Heart left ventricle (tissue), 16 donors: ENCODE measurements at regions of chr17 and their contacts with region 1.

Region 1: GRCh38 chr17:4939796-4940624 is at the starts of genes RNF167 and SLC25A11:
- DNase-seq: peak; percentile 94 to 97 (median 95)
- ATAC-seq: peak; percentile 91 to 95 (median 94)
- H3K4me3 ChIP-seq: peak within 1 kb of the TSS; percentile 76 to 98 (median 88)
- H3K27ac ChIP-seq: peak within 1 kb of the TSS; percentile 91 to 100 (median 97)
- H3K4me1 ChIP-seq: peaks cover 11 to 57% (median 33%) of the 10 kb centered on the region in 12 donors
- H3K27me3 ChIP-seq: no peaks in the 10 kb centered on the region
- CTCF ChIP-seq: peak in 2 of 12 donors; percentile 6 to 10
- POLR2A ChIP-seq: peak in 1 of 2 donors; percentile 86
- total RNA-seq, gene RNF167: 50.7 to 111 (median 79.6) TPM
- total RNA-seq, gene SLC25A11: 146 to 282 (median 204) TPM

Region 2: DNA sequence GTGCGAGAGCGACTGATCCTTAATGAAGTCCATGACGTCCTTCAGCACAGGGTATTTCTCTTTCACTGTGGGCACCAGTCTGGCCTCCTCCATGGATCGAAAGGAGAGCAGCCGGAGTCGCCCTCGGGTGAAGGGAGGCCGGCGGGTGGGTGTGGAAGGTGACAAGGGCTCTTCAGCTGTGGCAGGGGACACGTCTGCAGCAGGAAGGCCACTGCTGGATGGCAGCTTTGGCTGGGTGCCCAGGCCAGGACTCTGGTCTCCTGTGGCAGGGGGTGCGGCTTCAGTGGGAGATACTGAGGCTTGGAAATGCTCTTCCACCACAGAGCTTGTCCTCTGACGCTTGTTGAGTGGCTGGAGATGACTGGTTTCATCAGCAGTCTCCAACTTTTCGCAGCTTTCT is 875.6 kb before region 1 on chr17:
- intact Hi-C with region 1: no loop called
- DNase-seq: peak; percentile 44 to 80 (median 70)
- ATAC-seq: peak; percentile 73 to 89 (median 86)
- H3K4me3 ChIP-seq: no peak overlapping the region
- H3K27ac ChIP-seq: no peak overlapping the region
- H3K4me1 ChIP-seq: no peaks in the 10 kb centered on the region
- H3K27me3 ChIP-seq: no peaks in the 10 kb centered on the region
- CTCF ChIP-seq: no peak
- POLR2A ChIP-seq: no peak

Region 3: DNA sequence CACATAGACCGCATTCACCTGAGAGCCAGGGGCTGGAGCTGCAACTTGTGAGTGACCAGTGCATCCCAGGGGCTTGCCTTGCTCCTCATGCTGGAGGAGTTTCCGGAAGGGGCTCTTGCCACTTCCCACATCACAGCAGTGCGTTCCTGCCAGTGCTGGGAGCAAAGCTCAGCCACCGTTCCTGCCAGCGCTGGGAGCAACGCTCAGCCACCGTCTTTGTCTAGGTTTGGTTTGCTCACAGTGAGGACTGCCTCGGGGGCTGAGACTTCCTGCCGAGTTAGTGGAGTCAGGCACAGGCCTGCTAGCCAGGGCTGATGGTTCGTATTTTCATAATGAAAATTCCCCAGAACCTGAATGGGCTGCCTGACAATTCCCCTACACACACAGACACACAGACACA is 31.7 kb before region 1 on chr17:
- intact Hi-C with region 1: loop called in 1 of 10 experiments (anchors 5 kb)
- DNase-seq: no peak
- ATAC-seq: peak in 2 of 4 donors; percentile 41 to 48
- H3K4me3 ChIP-seq: no peak overlapping the region
- H3K27ac ChIP-seq: peak overlapping the region in 9 of 12 donors; percentile 1 to 75 (median 60)
- H3K4me1 ChIP-seq: peaks cover 0 to 20% (median 10%) of the 10 kb centered on the region in 12 donors
- H3K27me3 ChIP-seq: no peaks in the 10 kb centered on the region
- CTCF ChIP-seq: no peak
- POLR2A ChIP-seq: no peak

Region 4: DNA sequence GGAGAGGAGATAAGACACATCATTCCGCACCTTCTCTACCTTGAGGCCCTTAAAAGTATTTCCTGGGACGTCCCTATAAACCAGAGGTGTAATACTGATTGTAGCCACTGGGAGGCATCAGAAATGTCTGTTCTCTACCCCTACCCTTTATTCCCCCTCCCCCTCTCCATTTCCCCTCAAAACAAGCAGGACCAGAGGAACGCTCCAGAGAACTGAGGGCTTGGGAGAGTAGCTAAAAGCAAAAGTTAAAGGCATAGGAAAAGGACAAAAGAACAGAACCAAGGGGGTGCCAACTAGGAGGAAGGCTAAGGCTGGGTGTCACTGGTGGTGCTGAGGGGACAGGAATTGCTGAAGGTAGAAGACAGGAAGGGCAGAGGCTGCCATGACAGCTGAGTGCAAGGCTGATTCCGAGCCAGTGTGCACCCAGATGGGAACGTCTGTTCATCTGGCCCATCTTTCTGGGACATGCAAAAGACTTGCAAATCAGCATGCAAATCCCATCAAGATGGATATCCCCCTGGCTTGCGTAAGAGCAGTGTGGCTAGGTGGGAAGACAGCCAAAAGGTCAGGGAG is 40.7 kb after region 1 on chr17:
- intact Hi-C with region 1: loop called in 5 of 10 experiments (anchors 5 to 10 kb)
- DNase-seq: no peak
- ATAC-seq: peak in 3 of 4 donors; percentile 48 to 59 (median 53)
- H3K4me3 ChIP-seq: no peak overlapping the region
- H3K27ac ChIP-seq: no peak overlapping the region
- H3K4me1 ChIP-seq: peaks cover 0 to 43% (median 1%) of the 10 kb centered on the region in 12 donors
- H3K27me3 ChIP-seq: no peaks in the 10 kb centered on the region
- CTCF ChIP-seq: peak; percentile 62 to 77 (median 68)
- POLR2A ChIP-seq: no peak

Region 5: GRCh38 chr17:4997302-4998026 is 57.5 kb after region 1 on chr17 and contains the starts of genes INCA1 and KIF1C:
- intact Hi-C with region 1: loop called in 5 of 10 experiments (anchors 1 to 5 kb)
- DNase-seq: peak; percentile 95 to 98 (median 96)
- ATAC-seq: peak; percentile 63 to 90 (median 88)
- H3K4me3 ChIP-seq: peak within 1 kb of the TSS; percentile 66 to 100 (median 94)
- H3K27ac ChIP-seq: peak within 1 kb of the TSS; percentile 92 to 99 (median 95)
- H3K4me1 ChIP-seq: peaks cover 0 to 41% (median 31%) of the 10 kb centered on the region in 12 donors
- H3K27me3 ChIP-seq: no peaks in the 10 kb centered on the region
- CTCF ChIP-seq: peak in 6 of 12 donors; percentile 7 to 35 (median 27)
- POLR2A ChIP-seq: peak in 1 of 2 donors; percentile 87
- total RNA-seq, gene INCA1: 0.75 to 4.0 (median 2.7) TPM
- total RNA-seq, gene KIF1C: 335 to 868 (median 539) TPM